ENCODE measurements at regions of chr4 and their contacts with region 1.

Region 1: GRCh38 chr4:55554453-55555030 is 7.8 kb upstream of the CLOCK start:
- DNase-seq: no peak
- H3K4me3 ChIP-seq: no peak overlapping the region
- H3K27ac ChIP-seq: no peak overlapping the region
- H3K4me1 ChIP-seq: no peaks in the 10 kb centered on the region
- H3K27me3 ChIP-seq: no peaks in the 10 kb centered on the region
- CTCF ChIP-seq: peak; percentile 39

Region 2: GRCh38 chr4:55321707-55322264 is 232.8 kb before region 1 on chr4:
- intact Hi-C with region 1: no loop called
- DNase-seq: peak; percentile 81
- H3K4me3 ChIP-seq: no peak overlapping the region
- H3K27ac ChIP-seq: no peak overlapping the region
- H3K4me1 ChIP-seq: no peaks in the 10 kb centered on the region
- H3K27me3 ChIP-seq: no peaks in the 10 kb centered on the region
- CTCF ChIP-seq: peak; percentile 44

Region 3: GRCh38 chr4:55866973-55867574 is 312.5 kb after region 1 on chr4:
- intact Hi-C with region 1: loop called (anchors 10 kb)
- DNase-seq: no peak
- H3K4me3 ChIP-seq: no peak overlapping the region
- H3K27ac ChIP-seq: no peak overlapping the region
- H3K4me1 ChIP-seq: no peaks in the 10 kb centered on the region
- H3K27me3 ChIP-seq: no peaks in the 10 kb centered on the region
- CTCF ChIP-seq: peak; percentile 75

Measured in colonic mucosa (tissue), 4 donors.